Aorta (tissue), 5 donors: ENCODE measurements at regions of chr20 and their contacts with region 1.

Region 1: DNA sequence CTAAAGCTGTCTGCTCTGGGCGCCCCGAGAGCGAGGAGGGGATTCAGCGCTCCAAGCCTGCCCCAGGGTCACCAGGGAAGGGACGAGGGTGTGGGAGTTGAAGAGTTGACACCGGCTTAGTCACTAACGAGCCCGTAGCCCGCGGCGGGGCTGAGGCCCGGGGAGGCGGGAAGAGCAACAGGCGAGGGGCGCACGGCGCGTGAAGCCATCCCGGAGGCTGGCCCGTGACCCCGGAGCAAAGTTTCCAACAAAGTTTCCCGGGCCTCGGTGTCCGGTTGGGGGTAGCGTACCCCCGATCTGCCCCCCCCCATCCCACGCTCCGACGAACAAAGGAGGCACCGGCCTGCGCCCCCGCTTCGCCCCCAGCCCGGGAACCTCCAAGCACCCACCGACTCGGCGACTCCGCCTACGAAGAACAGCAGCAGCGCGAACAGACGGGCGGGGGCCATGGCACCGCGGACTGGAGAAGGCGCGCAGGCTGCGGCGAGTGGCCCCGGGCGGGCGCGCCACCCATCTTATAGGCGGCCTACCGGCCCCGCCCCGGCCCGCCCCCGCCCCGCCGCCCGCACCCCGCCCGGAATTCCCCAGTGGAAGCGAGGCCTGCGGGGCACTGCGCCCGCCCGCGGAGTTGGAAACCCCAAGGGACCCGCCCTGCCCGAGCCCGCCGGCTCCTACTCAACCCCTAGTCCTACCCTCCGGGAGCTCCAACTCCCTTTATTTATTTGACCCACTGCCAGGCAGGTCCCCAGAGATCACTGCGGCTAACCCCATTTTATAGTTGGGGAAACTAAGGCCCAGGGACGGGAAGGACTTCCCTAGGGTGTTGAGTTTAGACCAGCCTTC is at the start of gene SDC4:
- DNase-seq: peak; percentile 76 to 94
- ATAC-seq: peak; percentile 89
- H3K4me3 ChIP-seq: peak within 1 kb of the TSS; percentile 54 to 76
- H3K27ac ChIP-seq: peak within 1 kb of the TSS; percentile 46 to 94
- H3K4me1 ChIP-seq: no peaks in the 10 kb centered on the region
- H3K27me3 ChIP-seq: peaks cover 0 to 2% of the 10 kb centered on the region in 2 donors
- total RNA-seq, gene SDC4: 51.2 to 114 TPM

Region 2: GRCh38 chr20:44234566-44235317 is 1113.4 kb before region 1 on chr20:
- intact Hi-C with region 1: no loop called
- DNase-seq: no peak
- ATAC-seq: no peak
- H3K4me3 ChIP-seq: no peak overlapping the region
- H3K27ac ChIP-seq: no peak overlapping the region
- H3K4me1 ChIP-seq: no peaks in the 10 kb centered on the region
- H3K27me3 ChIP-seq: no peaks in the 10 kb centered on the region

Region 3: DNA sequence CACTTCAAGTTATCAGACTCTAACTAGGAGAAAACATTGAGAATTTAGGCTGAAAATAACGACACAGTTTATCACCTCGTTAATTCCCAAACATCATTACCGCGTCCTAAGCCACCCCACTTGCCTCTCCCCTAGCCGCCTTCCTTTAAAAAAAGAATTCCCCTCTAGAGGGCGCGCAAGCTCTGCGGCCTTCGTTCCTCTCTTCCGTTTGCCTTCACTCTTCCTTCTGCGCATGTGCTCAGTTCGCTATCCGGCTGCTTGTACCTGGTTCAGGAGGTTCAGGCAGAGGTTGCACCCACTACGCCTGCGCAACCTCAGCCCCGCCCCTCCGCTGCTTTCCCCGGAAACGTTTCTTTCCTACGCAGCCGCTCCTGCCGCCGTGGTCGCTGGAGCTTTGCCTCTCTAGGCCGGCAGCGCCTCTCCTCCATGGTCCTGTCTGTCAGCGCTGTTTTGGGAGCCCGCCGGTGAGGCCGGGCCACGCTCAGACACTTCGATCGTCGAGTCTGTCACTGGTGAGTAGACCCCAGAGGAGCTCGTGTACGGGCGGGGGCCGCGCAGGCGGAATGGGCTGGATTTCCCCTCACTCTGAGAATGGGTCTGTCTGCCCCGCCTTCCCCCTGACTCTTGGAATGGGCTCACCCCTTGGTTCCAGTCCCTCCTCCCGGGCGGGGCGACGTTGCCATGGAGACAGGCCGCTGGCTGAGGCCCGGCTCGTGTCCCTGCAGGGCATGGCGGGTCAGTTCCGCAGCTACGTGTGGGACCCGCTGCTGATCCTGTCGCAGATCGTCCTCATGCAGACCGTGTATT is 14.8 kb after region 1 on chr20 and contains the start of gene SYS1:
- intact Hi-C with region 1: loop called in 1 of 2 experiments (anchors 1 kb)
- DNase-seq: peak; percentile 99 to 100
- ATAC-seq: peak; percentile 97
- H3K4me3 ChIP-seq: peak within 1 kb of the TSS; percentile 59 to 88
- H3K27ac ChIP-seq: peak within 1 kb of the TSS; percentile 73 to 87
- H3K4me1 ChIP-seq: peaks cover 0 to 2% of the 10 kb centered on the region in 2 donors
- H3K27me3 ChIP-seq: no peaks in the 10 kb centered on the region
- total RNA-seq, gene SYS1: 20.3 to 25.0 TPM

Region 4: GRCh38 chr20:45781391-45781931 is 433.3 kb after region 1 on chr20:
- intact Hi-C with region 1: loop called in 1 of 2 experiments (anchors 5 kb)
- DNase-seq: peak in 1 of 2 donors; percentile 57
- ATAC-seq: no peak
- H3K4me3 ChIP-seq: no peak overlapping the region
- H3K27ac ChIP-seq: peak overlapping the region; percentile 69 to 79
- H3K4me1 ChIP-seq: peaks cover 0 to 5% of the 10 kb centered on the region in 2 donors
- H3K27me3 ChIP-seq: no peaks in the 10 kb centered on the region